Common myeloid progenitor, CD34-positive (primary cell): ENCODE measurements at regions of chr13 and their contacts with region 1.

Region 1: DNA sequence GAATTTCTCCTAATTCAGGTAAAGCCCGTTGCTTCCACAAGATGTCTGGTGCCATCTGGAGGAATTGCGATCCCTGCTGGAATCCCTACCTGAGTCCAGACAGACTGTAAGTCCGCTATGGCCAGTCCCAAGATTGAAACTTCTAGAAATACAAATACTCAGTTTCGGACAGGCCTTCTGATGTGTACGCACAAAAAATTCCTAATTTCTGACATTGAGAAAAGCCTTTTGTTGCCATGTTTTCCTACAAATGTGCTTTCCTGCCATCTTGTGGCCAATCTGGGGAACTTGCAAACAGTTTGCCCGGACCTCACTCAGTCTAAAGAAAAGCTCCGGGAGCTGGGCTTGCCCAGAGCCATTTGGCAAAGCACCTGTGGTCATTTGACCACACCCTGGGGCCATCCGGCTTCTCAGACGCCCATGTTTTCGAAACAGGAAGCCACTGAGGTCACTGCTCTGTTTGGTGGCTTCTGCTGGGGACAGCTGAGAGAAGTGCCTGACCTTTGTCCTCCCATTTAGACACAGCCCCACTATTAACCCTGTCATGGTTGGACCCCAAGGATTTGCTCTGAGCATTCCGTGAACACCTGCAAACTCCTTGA is 79.4 kb downstream of the SLC15A1 start:
- DNase-seq: peak; percentile 54 to 73 (median 69)
- H3K4me3 ChIP-seq: no peak overlapping the region
- H3K27ac ChIP-seq: no peak overlapping the region
- H3K4me1 ChIP-seq: no peaks in the 10 kb centered on the region
- H3K27me3 ChIP-seq: peaks cover 0 to 8% (median 5%) of the 10 kb centered on the region in 5 experiments

Region 2: GRCh38 chr13:98445340-98446233 is 227.5 kb before region 1 on chr13:
- CTCF ChIA-PET with region 1: interaction called, 12 read pairs
- POLR2A ChIA-PET with region 1: no interaction called
- DNase-seq: peak; percentile 60 to 75 (median 73)
- H3K4me3 ChIP-seq: peak overlapping the region in 2 of 7 experiments; percentile 34 to 69
- H3K27ac ChIP-seq: no peak overlapping the region
- H3K4me1 ChIP-seq: peaks cover 0 to 21% (median 9%) of the 10 kb centered on the region in 4 experiments
- H3K27me3 ChIP-seq: no peaks in the 10 kb centered on the region

Region 3: GRCh38 chr13:98535501-98536354 is 137.3 kb before region 1 on chr13:
- CTCF ChIA-PET with region 1: no interaction called
- POLR2A ChIA-PET with region 1: no interaction called
- DNase-seq: no peak
- H3K4me3 ChIP-seq: no peak overlapping the region
- H3K27ac ChIP-seq: no peak overlapping the region
- H3K4me1 ChIP-seq: no peaks in the 10 kb centered on the region
- H3K27me3 ChIP-seq: peaks cover 0 to 6% (median 0%) of the 10 kb centered on the region in 5 experiments

Region 4: DNA sequence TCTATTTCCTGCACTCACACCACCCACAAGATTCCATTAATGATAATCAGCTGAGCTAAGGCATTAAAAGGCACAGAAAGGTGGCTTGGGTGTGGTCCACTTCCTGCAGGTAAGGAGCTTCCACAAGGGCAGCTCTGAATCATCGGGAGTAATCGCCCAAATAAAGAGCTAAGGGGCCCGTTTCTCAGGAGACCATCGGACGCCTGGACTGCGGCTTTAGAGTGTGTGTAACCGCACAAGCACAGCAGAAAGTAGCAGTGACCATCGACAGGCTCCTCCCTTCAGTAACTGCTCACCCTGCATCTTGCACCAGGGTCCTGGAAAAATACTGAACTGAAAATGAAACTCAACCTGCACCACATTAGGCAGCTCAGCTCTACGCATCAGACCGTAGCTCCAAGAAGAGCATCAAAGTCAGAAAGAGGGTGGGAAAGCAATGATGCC is 102.1 kb before region 1 on chr13:
- CTCF ChIA-PET with region 1: no interaction called
- POLR2A ChIA-PET with region 1: no interaction called
- DNase-seq: peak in 2 of 3 donors; percentile 24 to 26
- H3K4me3 ChIP-seq: peak overlapping the region in 1 of 7 experiments; percentile 51
- H3K27ac ChIP-seq: no peak overlapping the region
- H3K4me1 ChIP-seq: peaks cover 14 to 53% (median 29%) of the 10 kb centered on the region in 4 experiments
- H3K27me3 ChIP-seq: no peaks in the 10 kb centered on the region

Region 5: GRCh38 chr13:98685146-98685545 is 12.1 kb after region 1 on chr13:
- CTCF ChIA-PET with region 1: interaction called, 15 read pairs
- POLR2A ChIA-PET with region 1: no interaction called
- DNase-seq: no peak
- H3K4me3 ChIP-seq: no peak overlapping the region
- H3K27ac ChIP-seq: no peak overlapping the region
- H3K4me1 ChIP-seq: no peaks in the 10 kb centered on the region
- H3K27me3 ChIP-seq: peaks cover 0 to 4% (median 0%) of the 10 kb centered on the region in 5 experiments